GM12878 (cell line): ENCODE measurements at regions of chr10 and their contacts with region 1.

Region 1: DNA sequence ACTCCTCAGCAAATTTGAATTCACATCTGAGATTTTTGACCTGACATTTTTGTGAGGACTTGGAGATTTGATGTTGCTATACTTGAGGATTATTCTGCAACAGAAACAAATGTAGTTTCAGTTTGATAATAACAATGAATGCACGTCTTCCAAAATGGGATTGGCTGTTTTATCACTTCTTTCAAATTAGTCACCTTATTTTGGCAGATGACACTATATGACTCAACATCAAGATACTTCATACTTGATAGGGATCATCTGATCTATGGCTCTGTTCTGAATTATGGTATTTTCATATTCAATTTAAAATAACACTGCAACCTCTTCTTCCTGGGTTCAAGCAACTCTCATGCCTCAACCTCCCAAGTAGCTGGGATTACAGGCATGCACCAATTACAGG is 24.2 kb downstream of the ARL5B start:
- DNase-seq: no peak
- ATAC-seq: peak; percentile 12; the same call in 2 of the 3 replicates
- H3K4me3 ChIP-seq: no peak overlapping the region
- H3K27ac ChIP-seq: no peak overlapping the region
- H3K4me1 ChIP-seq: no peaks in the 10 kb centered on the region
- H3K27me3 ChIP-seq: no peaks in the 10 kb centered on the region
- CTCF ChIP-seq: no peak
- EP300 ChIP-seq: no peak
- POLR2A ChIP-seq: no peak
- RAD21 ChIP-seq: no peak

Region 2: GRCh38 chr10:18666810-18667209 is 16.6 kb before region 1 on chr10:
- CTCF ChIA-PET with region 1: interaction called, 5 read pairs
- POLR2A ChIA-PET with region 1: interaction called, 3 read pairs
- RAD21 ChIA-PET with region 1: no interaction called
- SMC1A ChIA-PET with region 1: interaction called, 14 read pairs
- in situ Hi-C with region 1: no loop called
- intact Hi-C with region 1: no loop called
- DNase-seq: no peak
- ATAC-seq: no peak
- H3K4me3 ChIP-seq: no peak overlapping the region
- H3K27ac ChIP-seq: no peak overlapping the region
- H3K4me1 ChIP-seq: no peaks in the 10 kb centered on the region; the same call in 1 of the 2 replicates
- H3K27me3 ChIP-seq: no peaks in the 10 kb centered on the region
- CTCF ChIP-seq: no peak
- EP300 ChIP-seq: no peak
- POLR2A ChIP-seq: no peak
- RAD21 ChIP-seq: no peak